ENCODE measurements at regions of chr16 and their contacts with region 1.

Region 1: GRCh38 chr16:14155572-14156205 is 84.6 kb downstream of the MRTFB start:
- DNase-seq: no peak
- ATAC-seq: peak; percentile 42; the same call in 1 of the 2 replicates
- H3K4me3 ChIP-seq: no peak overlapping the region
- H3K27ac ChIP-seq: no peak overlapping the region
- H3K4me1 ChIP-seq: peaks cover 5% of the 10 kb centered on the region
- H3K27me3 ChIP-seq: no peaks in the 10 kb centered on the region
- CTCF ChIP-seq: no peak

Region 2: DNA sequence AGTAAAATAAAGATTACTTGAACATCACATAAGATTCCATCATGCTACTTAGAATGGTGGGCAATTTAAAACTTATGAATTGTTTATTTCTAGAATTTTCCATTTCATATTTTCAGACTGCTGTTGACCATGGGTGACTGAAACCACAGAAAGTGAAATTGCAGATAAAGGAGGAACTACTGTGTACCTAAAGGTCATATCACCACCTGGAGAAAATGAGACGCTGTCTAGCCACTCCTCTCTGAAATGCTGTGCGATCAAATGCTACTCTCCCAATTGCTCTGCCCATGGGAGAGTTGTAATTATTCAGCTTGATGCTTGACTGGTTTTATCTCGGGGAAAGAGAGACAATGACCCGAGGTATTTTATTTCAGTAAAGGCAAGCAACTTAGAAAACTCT is 364.6 kb before region 1 on chr16:
- CTCF ChIA-PET with region 1: no interaction called
- POLR2A ChIA-PET with region 1: no interaction called
- in situ Hi-C with region 1: no loop called
- intact Hi-C with region 1: no loop called
- DNase-seq: no peak
- ATAC-seq: no peak
- H3K4me3 ChIP-seq: no peak overlapping the region
- H3K27ac ChIP-seq: no peak overlapping the region
- H3K4me1 ChIP-seq: no peaks in the 10 kb centered on the region
- H3K27me3 ChIP-seq: peaks cover 7% of the 10 kb centered on the region
- CTCF ChIP-seq: no peak

Region 3: GRCh38 chr16:14070877-14071575 is 84.7 kb before region 1 on chr16 and contains the start of gene MRTFB:
- CTCF ChIA-PET with region 1: interaction called, 3 read pairs
- POLR2A ChIA-PET with region 1: interaction called, 17 read pairs
- in situ Hi-C with region 1: no loop called
- intact Hi-C with region 1: no loop called
- DNase-seq: no peak
- ATAC-seq: peak; percentile 95
- H3K4me3 ChIP-seq: peak within 1 kb of the TSS; percentile 75 to 78
- H3K27ac ChIP-seq: peak within 1 kb of the TSS; percentile 91
- H3K4me1 ChIP-seq: peaks cover 26% of the 10 kb centered on the region
- H3K27me3 ChIP-seq: no peaks in the 10 kb centered on the region
- CTCF ChIP-seq: no peak
- total RNA-seq, gene MRTFB: 90.5 TPM

Region 4: DNA sequence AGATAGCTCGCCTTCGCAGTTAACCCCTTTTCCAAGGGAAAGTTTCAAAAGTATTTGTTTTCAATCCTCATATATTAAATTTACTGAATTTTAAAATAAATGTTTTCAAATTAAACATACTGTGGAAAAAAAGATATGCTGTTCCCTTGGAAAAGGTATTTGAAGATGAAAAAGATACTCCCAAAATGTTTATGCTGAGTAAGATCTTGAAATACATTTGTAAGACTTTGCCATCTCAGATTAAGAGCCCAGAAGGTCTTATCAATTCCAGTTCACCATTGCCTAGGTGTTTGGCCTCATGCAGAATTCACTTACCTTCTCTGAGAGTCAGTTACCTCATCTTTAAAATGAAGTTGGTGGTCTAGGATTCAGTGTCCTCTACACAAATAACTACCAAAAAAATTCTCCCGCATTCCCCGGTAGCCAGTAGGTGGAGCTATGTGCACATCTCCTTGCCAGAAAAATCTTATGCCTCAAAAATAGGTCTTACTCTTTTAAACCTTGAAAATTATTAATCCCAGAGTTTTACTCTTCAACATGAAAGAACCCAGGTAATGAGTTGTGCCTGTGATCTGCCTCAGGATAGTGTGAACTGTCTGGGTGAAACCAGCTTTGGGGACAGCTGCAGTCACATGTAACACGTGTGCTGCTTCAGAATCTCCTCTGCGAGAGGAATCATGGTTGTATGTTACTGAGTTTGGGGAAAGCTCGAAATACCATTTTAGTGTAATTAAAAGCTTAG is 93.8 kb after region 1 on chr16:
- CTCF ChIA-PET with region 1: no interaction called
- POLR2A ChIA-PET with region 1: no interaction called
- in situ Hi-C with region 1: no loop called
- intact Hi-C with region 1: no loop called
- DNase-seq: peak; percentile 43
- ATAC-seq: peak; percentile 32; the same call in 1 of the 2 replicates
- H3K4me3 ChIP-seq: no peak overlapping the region
- H3K27ac ChIP-seq: no peak overlapping the region
- H3K4me1 ChIP-seq: no peaks in the 10 kb centered on the region
- H3K27me3 ChIP-seq: no peaks in the 10 kb centered on the region
- CTCF ChIP-seq: peak; percentile 96